Right lobe of liver (tissue), 6 donors: ENCODE measurements at regions of chr13 and their contacts with region 1.

Region 1: DNA sequence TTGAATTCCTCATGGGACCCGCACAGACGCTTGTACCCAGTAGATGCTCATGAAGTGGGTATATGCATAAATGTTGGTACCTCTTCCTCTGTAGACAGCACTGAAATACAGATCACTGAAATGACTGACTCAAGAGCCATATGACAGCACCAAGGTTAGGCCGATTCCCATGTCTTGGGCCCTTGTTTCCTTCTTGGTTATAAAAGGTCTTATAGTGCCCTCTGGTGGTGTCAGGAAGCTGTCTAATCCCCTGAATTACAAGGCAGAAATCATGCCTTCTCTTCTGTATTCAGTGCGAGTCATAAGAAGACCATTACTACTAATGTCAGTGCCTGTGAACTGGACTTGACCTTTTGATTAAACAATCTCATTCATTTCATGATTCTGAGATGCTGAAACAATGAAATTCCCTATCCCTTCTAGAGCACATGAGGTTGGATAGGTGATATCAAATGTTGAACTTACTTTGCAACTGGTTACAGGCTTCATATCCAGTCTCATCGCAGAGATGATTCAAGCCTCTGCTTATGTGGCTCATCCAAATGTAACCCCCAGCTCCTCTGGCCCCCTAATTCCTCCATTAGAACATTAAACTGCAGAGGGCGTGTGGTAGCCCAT is 59.7 kb downstream of the SPATA13 start:
- DNase-seq: no peak
- ATAC-seq: peak; percentile 51 to 67 (median 59)
- H3K4me3 ChIP-seq: no peak overlapping the region
- H3K27ac ChIP-seq: peak overlapping the region; percentile 76 to 93 (median 87)
- H3K4me1 ChIP-seq: peaks cover 0 to 70% (median 26%) of the 10 kb centered on the region in 4 donors
- H3K27me3 ChIP-seq: no peaks in the 10 kb centered on the region
- CTCF ChIP-seq: peak; percentile 73 to 94 (median 80)
- POLR2A ChIP-seq: no peak

Region 2: GRCh38 chr13:24012648-24013047 is 207.5 kb before region 1 on chr13:
- intact Hi-C with region 1: loop called in 1 of 2 experiments (anchors 10 kb)
- DNase-seq: no peak
- ATAC-seq: peak in 2 of 4 donors; percentile 7 to 31
- H3K4me3 ChIP-seq: no peak overlapping the region
- H3K27ac ChIP-seq: no peak overlapping the region
- H3K4me1 ChIP-seq: no peaks in the 10 kb centered on the region
- H3K27me3 ChIP-seq: no peaks in the 10 kb centered on the region
- CTCF ChIP-seq: no peak
- POLR2A ChIP-seq: no peak

Region 3: DNA sequence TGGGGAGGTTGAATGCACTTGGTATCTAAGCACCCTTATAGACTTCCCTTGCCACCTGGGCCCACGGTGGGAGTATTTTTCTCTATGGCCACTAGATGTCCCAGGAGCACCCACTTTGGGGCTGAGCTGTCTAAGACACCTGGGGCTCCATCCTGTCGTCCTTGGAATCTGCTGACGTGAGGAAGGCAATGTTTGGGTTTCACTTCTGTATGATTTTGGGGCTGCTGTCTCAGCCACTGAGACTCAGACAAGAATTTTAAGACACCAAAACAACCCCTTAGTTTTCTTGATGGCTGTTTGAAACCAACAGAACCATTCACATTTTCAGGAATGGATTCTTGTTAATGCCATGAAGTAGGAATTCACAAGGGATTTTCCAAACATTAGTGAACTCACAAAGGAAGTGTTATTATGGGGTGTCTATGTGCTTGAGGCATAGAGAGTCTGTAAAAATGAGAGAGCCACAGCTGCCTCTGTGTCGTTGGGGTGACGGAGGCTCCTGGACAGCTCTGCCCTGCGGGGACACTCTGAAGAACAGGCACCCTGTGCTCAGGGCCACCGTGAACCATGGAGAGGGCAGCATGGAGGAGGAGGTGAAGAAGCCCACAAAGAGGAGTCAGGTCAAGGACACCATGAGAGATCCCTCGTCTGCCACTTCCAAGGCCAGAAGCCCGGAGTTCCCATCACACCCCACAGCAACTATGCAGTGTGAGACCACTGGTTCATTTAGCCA is 166.5 kb before region 1 on chr13:
- intact Hi-C with region 1: loop called (anchors 10 kb)
- DNase-seq: peak; percentile 51 to 73 (median 66)
- ATAC-seq: peak; percentile 95 to 97 (median 95)
- H3K4me3 ChIP-seq: no peak overlapping the region
- H3K27ac ChIP-seq: peak overlapping the region in 2 of 3 donors; percentile 38 to 42
- H3K4me1 ChIP-seq: peaks cover 0 to 19% (median 0%) of the 10 kb centered on the region in 4 donors
- H3K27me3 ChIP-seq: no peaks in the 10 kb centered on the region
- CTCF ChIP-seq: peak; percentile 73 to 82 (median 81)
- POLR2A ChIP-seq: no peak